ENCODE measurements at regions of chr10 and their contacts with region 1.

Region 1: DNA sequence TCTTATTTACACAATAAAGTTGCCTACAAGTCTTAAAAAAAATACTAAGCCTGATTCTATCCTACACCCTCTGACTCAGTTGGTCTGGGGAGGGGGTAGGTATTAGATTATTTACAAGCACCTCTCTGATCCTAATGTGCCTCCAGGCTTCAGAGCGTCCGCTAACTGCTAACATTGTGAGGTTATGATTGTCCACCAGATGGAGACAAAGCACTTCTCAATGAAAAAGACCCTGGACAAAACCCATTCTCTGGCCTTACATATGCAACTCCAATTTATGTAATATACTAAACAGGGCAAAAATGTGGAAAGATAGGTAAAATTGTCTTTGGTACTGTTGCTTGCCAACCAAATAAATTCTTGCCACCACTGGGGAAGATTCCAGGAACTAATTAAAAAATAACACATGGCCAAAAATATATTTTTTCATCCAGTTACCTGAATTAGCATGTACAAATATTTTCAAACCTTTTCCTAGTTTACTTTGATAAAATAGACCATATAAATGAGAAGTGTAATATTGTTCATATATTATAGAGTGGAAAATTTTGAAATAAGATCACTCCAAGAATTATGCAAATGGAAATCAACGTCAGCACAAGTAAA is 92.4 kb downstream of the KIF20B start:
- DNase-seq: peak in 1 of 2 donors; percentile 79
- ATAC-seq: peak; percentile 63 to 80 (median 76)
- H3K4me3 ChIP-seq: no peak overlapping the region
- H3K4me3 Mint-ChIP-seq: no peak overlapping the region
- H3K27ac ChIP-seq: no peak overlapping the region
- H3K27ac Mint-ChIP-seq: no peak overlapping the region
- H3K4me1 ChIP-seq: no peaks in the 10 kb centered on the region
- H3K4me1 Mint-ChIP-seq: no peaks in the 10 kb centered on the region
- H3K27me3 ChIP-seq: no peaks in the 10 kb centered on the region
- H3K27me3 Mint-ChIP-seq: peaks cover 14 to 22% of the 10 kb centered on the region in 2 donors
- CTCF ChIP-seq: peak; percentile 70

Region 2: DNA sequence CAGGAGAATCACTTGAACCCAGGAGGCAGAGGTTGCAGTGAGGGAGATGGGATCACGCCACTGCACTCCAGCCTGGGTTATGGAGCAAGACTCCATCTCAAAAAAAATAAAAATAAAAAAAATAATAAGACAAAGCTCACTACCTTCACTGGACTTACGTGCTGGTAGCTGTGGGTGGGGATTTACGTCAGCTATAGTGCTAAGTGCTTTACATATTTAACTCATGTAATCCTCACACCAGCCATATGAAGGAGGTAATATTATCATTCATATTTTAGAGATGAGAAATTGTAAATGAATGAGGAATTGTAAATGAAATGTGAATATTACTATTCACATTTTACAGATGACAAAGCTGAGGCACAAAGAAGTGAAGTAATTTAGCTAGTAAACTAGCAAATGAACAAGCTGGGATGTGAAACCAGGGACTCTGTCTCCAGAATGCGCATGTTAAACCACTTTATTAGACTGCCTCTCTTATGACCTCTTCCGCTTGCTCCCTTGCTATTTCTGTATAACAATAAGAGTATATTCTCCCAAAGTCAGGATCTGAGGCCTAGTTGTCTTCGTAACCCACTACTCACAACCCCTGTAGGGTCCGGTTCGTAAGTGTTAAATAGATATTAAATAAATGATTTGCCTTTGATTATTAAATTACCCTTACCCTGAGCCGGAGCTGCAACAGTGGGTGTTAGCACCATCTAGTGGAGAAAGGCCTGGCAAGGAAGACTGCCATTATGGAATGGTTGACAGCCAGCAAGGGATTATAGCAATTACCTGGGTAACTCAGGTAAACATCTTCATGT is 993.8 kb after region 1 on chr10:
- intact Hi-C with region 1: loop called (anchors 5 kb)
- DNase-seq: peak in 1 of 2 donors; percentile 54
- ATAC-seq: no peak
- H3K4me3 ChIP-seq: no peak overlapping the region
- H3K4me3 Mint-ChIP-seq: no peak overlapping the region
- H3K27ac ChIP-seq: no peak overlapping the region
- H3K27ac Mint-ChIP-seq: no peak overlapping the region
- H3K4me1 ChIP-seq: no peaks in the 10 kb centered on the region
- H3K4me1 Mint-ChIP-seq: no peaks in the 10 kb centered on the region
- H3K27me3 ChIP-seq: no peaks in the 10 kb centered on the region
- H3K27me3 Mint-ChIP-seq: no peaks in the 10 kb centered on the region
- CTCF ChIP-seq: no peak

Region 3: GRCh38 chr10:90862908-90863514 is 1069.3 kb after region 1 on chr10:
- intact Hi-C with region 1: loop called (anchors 1 kb)
- DNase-seq: peak in 1 of 2 donors; percentile 46
- ATAC-seq: no peak
- H3K4me3 ChIP-seq: no peak overlapping the region
- H3K4me3 Mint-ChIP-seq: no peak overlapping the region
- H3K27ac ChIP-seq: no peak overlapping the region
- H3K27ac Mint-ChIP-seq: no peak overlapping the region
- H3K4me1 ChIP-seq: peaks cover 5% of the 10 kb centered on the region
- H3K4me1 Mint-ChIP-seq: peaks cover 4 to 5% of the 10 kb centered on the region in 2 donors
- H3K27me3 ChIP-seq: peaks cover 6% of the 10 kb centered on the region
- H3K27me3 Mint-ChIP-seq: peaks cover 35 to 46% of the 10 kb centered on the region in 2 donors
- CTCF ChIP-seq: peak; percentile 50

Measured in natural killer cell (primary cell).